PC-3 (cell line): ENCODE measurements at regions of chr5 and their contacts with region 1.

Region 1: GRCh38 chr5:57193757-57194413 is 20.0 kb downstream of the GPBP1 start:
- DNase-seq: no peak
- ATAC-seq: no peak
- H3K4me3 ChIP-seq: no peak overlapping the region
- H3K27ac ChIP-seq: no peak overlapping the region
- H3K4me1 ChIP-seq: no peaks in the 10 kb centered on the region
- H3K27me3 ChIP-seq: no peaks in the 10 kb centered on the region
- CTCF ChIP-seq: no peak

Region 2: GRCh38 chr5:56893251-56893951 is 300.5 kb before region 1 on chr5:
- CTCF ChIA-PET with region 1: no interaction called
- POLR2A ChIA-PET with region 1: interaction called, 14 read pairs
- intact Hi-C with region 1: no loop called
- DNase-seq: no peak
- ATAC-seq: no peak
- H3K4me3 ChIP-seq: no peak overlapping the region
- H3K27ac ChIP-seq: no peak overlapping the region
- H3K4me1 ChIP-seq: no peaks in the 10 kb centered on the region
- H3K27me3 ChIP-seq: no peaks in the 10 kb centered on the region
- CTCF ChIP-seq: no peak

Region 3: DNA sequence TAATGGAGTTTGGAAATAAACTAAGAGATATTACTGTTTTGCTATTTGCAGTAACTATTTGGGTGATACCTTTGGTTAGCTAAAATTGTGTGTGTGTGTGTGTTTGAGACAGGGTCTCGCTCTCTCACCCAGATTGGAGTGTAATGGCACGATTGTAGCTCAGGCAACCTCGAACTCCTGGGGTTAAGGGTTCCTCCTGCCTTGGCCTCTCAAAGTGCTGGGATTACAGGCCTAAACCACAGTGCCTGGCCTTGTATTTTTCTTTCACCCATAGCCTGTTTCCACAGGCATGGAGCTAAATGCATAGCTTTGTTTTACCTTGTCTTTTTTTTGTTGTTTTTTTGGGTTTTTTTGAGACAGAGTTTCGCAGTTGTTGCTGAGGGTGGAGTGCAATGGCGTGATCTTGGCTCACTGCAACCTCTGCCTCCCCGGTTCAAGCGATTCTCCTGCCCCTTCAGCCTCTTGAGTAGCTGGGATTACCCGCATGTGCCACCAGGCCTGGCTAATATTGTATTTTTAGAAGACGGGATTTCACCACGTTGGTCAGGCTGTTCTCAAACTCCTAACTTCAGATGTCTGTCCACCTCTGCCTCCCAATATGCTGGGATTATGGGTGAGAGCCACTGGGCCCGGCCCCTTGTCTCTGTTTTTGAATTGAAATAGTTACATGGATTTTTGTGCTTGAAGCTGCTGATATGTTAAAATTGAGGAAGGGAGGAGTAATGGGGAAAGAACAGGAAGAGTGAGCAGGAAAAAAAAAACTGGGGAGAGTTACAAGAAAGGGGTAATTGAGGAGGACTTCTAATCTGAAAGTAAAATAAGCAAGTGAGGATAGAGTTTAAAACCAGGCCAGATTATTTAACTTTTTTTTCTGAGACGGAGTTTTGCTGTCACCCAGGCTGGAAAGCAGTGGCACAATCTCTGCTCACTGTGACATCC is 14.4 kb before region 1 on chr5:
- CTCF ChIA-PET with region 1: no interaction called
- POLR2A ChIA-PET with region 1: no interaction called
- intact Hi-C with region 1: no loop called
- DNase-seq: no peak
- ATAC-seq: no peak
- H3K4me3 ChIP-seq: peak overlapping the region; percentile 98
- H3K27ac ChIP-seq: no peak overlapping the region
- H3K4me1 ChIP-seq: peaks cover 8% of the 10 kb centered on the region; the same call in 1 of the 2 replicates
- H3K27me3 ChIP-seq: no peaks in the 10 kb centered on the region
- CTCF ChIP-seq: no peak

Region 4: DNA sequence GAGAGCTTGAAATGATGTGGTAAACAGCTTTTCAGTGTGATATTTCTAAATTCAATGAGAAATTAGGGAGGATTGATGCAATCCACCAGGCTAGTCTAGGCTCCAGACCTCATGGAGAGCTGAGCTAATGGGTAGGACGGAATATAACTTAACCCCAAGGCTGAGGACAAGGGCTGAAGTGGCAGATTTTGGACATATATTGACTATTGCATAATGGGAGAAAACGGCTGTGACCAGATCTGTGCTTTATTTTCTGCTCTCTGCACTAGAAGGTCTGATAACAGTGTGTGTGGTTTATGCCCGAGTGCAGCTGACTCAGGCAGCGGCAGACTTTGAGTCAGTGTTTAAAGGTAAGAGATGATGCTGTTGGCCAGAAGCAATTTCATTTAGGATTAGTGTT is 218.1 kb after region 1 on chr5:
- CTCF ChIA-PET with region 1: no interaction called
- POLR2A ChIA-PET with region 1: no interaction called
- intact Hi-C with region 1: no loop called
- DNase-seq: peak; percentile 58
- ATAC-seq: peak; percentile 81
- H3K4me3 ChIP-seq: no peak overlapping the region
- H3K27ac ChIP-seq: peak overlapping the region; percentile 14
- H3K4me1 ChIP-seq: peaks cover 22% of the 10 kb centered on the region
- H3K27me3 ChIP-seq: no peaks in the 10 kb centered on the region
- CTCF ChIP-seq: no peak